Left cardiac atrium (tissue), 4 donors: ENCODE measurements at regions of chr22 and their contacts with region 1.

Region 1: DNA sequence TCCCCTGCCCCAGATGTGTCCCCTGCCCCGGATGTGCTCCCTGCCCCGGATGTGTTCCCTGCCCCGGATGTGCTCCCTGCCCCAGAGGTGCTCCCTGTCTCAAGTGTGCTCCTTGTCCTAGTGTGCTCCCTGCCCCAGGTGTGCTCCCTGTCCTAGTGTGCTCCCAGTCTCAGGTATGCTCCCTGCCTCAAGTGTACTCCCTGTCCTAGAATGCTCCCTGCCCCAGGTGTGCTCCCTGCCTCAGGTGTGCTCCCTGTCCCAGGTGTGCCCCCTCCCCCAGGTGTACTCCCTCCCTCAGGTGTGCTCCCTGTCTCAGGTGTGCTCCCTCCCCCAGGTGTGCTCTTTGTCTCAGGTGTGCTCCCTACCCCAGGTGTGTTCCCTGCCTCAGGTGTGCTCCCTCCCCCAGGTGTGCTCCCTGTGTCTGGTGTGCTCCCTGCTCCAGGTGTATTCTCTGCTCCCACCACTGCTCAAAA is 48.7 kb upstream of the RASD2 start:
- DNase-seq: no peak
- ATAC-seq: no peak

Region 2: GRCh38 chr22:35191412-35191811 is 300.5 kb before region 1 on chr22:
- intact Hi-C with region 1: no loop called
- DNase-seq: no peak
- ATAC-seq: no peak

Region 3: DNA sequence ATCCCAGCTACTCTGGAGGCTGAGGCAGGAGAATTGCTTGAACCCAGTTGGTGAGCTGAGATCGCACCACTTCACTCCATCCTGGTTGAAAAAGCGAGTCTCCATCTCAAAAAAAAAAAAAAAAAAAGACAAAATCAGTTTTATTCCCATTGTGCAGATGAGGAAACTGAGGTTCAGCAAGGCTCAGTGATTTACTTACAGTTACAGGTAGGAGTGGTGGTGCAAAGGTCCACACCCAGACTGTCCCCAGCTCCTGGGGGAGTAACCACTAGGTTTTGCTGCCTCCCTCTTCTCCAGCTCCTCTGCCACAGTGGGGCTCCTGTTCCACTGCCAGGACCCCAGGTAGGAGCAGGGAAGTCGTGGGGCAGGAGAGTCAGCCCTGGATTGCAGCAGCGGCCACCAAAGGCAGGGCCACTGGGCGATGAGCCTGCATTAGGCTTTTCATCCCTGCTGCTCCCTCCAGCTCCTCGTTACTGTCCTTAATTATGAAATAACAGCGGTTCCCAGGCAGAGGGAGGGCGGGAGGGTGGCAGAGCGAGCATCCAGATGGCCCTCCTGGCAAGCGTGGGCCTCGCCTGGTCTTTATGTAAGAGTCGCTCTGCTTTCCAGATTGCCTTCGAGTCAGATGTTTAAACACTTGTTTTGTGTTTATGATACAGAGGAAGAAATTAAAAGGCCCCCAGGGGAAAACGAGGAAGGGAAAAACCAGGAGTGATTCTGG is 33.2 kb after region 1 on chr22:
- intact Hi-C with region 1: loop called in 1 of 2 experiments (anchors 5 kb)
- DNase-seq: no peak
- ATAC-seq: peak in 1 of 2 donors; percentile 69